Posterior vena cava (tissue), 2 donors: ENCODE measurements at regions of chr9 and their contacts with region 1.

Region 1: DNA sequence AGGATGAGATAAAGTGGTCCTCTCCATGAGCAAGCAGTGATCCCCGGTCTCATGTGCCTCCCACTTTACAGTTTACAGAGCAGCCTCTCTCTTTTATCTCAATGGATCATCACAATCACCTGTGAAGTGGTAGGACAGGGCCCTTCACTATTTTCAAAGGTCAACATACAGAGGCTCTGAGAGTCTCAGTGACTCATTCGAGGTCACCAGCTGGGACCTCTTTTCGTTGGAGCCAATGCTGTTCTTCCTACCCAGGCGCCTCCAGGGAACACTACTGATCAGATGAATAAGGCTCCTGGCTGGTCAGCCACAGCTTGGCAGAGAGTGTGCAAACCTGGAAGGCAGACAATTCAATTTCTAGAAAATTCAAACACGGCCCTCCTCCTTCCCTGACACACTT is 16.6 kb downstream of the GGTA1 start:
- DNase-seq: peak; percentile 61

Region 2: GRCh38 chr9:121439711-121440664 is 43.1 kb before region 1 on chr9:
- intact Hi-C with region 1: loop called in 1 of 2 experiments (anchors 1 kb)
- DNase-seq: no peak

Region 3: GRCh38 chr9:121538246-121538645 is 55.2 kb after region 1 on chr9:
- intact Hi-C with region 1: loop called in 1 of 2 experiments (anchors 2 kb)
- DNase-seq: peak; percentile 42